Activated CD8-positive, alpha-beta T cell treated with anti-CD3 and anti-CD28 coated beads, Interleukin-2, amount 10 ng/mL, durations not matched to agents 7 days and 5 days (primary cell): ENCODE measurements at regions of chr1 and their contacts with region 1.

Region 1: DNA sequence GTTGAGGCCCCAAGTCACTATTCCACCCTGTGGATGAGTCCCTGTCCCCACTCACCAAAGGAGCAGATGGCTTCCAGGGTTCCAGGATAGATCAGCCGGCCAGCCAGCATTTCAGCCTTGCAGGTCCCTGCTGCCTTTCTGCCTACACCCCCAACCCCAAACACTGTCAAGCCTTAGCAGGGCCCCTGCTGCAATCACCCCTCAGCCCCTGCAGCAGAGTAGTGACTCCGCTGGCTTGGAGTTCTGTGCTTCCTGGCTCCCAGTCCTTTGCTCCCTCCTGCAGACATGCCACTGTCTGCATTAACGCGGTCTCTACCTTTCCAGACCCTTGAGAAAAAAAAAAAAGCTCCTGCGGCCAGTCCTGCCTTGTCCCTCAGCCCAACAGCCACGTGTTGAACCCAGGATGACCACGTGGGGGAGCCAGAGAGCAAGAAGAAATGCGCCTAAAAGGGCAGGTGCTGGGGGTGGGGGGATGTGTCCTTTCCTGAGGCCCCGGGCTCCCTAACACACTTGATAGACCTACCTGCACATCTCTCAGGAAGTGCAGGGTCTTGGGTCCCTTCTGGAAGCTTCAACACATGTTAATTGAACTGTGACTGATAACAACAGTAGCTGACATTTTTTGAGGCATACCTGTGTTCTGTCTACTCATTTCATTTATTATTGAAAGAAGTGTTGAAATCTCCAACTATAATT is 37.4 kb downstream of the RASSF5 start:
- DNase-seq: peak; percentile 85
- ATAC-seq: peak; percentile 81
- H3K4me3 Mint-ChIP-seq: no peak overlapping the region
- H3K27ac Mint-ChIP-seq: peak overlapping the region; percentile 26
- H3K4me1 Mint-ChIP-seq: peaks cover 20% of the 10 kb centered on the region
- H3K27me3 Mint-ChIP-seq: no peaks in the 10 kb centered on the region

Region 2: GRCh38 chr1:206469933-206470691 is 74.6 kb before region 1 on chr1 and contains the start of gene IKBKE:
- CTCF ChIA-PET with region 1: interaction called, 11 read pairs
- POLR2A ChIA-PET with region 1: no interaction called
- DNase-seq: peak; percentile 73
- ATAC-seq: peak; percentile 71
- H3K4me3 Mint-ChIP-seq: peak within 1 kb of the TSS; percentile 89
- H3K27ac Mint-ChIP-seq: peak within 1 kb of the TSS; percentile 94
- H3K4me1 Mint-ChIP-seq: peaks cover 88% of the 10 kb centered on the region
- H3K27me3 Mint-ChIP-seq: no peaks in the 10 kb centered on the region
- total RNA-seq, gene IKBKE: 68.3 to 70.1 TPM

Region 3: DNA sequence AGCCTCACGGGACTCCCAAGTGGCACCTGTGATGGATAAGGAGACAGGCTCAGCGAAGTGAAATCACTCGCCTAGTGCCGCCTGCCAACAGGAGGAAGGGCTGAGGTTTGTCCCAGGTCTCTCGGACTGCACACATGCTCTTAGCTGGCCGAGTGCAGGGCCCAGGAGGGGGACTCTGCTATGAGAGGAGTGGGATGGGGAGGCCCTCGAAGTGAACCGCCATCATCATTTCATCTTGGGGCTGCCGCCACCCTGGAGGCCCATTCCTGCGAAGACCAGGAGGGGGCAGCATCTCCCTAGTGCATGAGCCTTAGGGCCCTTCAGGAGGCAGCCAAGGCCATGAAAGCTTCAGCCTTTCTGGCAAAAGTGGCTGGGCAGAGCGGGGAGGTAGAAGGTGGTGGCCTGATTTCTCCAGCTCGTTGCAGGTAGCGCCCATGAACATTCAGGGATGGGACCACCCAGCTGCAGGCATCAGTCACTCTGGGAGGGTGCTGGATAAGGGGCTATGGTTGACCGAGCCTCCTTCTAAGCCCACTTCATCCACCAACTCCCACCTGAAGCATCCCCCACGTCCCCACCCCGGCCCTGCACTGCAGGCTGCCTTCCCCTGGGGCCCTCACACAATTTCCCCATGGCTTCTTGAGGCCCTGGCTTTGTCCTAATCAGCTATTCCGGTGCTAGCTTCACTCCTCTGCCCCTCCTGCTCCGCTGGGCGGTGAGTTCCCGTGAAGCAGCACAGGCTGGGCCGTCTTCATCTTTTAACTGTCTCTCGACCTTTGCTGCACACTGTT is 54.5 kb before region 1 on chr1:
- CTCF ChIA-PET with region 1: interaction called, 20 read pairs
- POLR2A ChIA-PET with region 1: no interaction called
- DNase-seq: peak; percentile 78
- ATAC-seq: peak; percentile 84
- H3K4me3 Mint-ChIP-seq: no peak overlapping the region
- H3K27ac Mint-ChIP-seq: peak overlapping the region; percentile 68
- H3K4me1 Mint-ChIP-seq: peaks cover 21% of the 10 kb centered on the region
- H3K27me3 Mint-ChIP-seq: no peaks in the 10 kb centered on the region

Region 4: GRCh38 chr1:206556750-206557635 is 12.3 kb after region 1 on chr1:
- CTCF ChIA-PET with region 1: interaction called, 175 read pairs
- POLR2A ChIA-PET with region 1: interaction called, 9 read pairs
- DNase-seq: peak; percentile 95
- ATAC-seq: peak; percentile 71
- H3K4me3 Mint-ChIP-seq: peak overlapping the region; percentile 86
- H3K27ac Mint-ChIP-seq: peak overlapping the region; percentile 82
- H3K4me1 Mint-ChIP-seq: peaks cover 67% of the 10 kb centered on the region
- H3K27me3 Mint-ChIP-seq: no peaks in the 10 kb centered on the region

Region 5: DNA sequence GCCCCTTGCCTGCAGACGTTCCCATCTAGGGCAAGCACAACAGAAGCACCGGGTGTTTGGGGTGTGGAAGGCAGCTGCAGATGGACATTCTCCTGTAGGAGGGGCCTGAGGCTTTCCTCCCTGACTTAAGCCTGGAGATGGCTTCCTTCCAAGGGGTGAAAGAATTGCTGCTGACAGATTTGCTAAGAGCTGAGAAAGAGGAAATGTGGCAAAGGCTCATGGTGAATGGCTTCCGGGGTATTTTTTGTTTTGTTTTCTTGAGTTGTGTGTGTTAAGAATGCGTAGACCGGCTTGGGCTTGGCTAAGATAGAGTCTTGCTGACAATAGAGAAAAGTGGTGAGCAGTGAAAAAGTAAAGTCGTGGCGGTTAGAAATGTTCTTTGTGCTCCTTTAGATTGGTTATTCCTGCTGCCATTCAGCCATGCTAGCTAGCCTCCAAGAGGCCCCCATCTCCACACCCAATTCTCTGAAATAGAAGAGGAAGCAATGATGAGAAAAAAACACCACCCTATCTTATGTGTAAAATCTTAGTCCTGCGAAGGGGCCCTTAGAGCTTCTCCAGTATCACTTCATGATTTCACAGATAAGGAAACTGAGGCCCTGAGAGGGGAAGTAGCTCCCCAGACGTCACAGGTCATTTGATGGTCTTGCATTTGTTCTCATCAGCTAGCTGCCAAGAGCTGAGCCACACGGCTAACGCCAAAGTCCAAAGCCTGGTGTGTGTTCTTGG is 30.6 kb after region 1 on chr1:
- CTCF ChIA-PET with region 1: interaction called, 728 read pairs
- POLR2A ChIA-PET with region 1: interaction called, 276 read pairs
- DNase-seq: peak; percentile 76
- ATAC-seq: peak; percentile 57
- H3K4me3 Mint-ChIP-seq: peak overlapping the region; percentile 62
- H3K27ac Mint-ChIP-seq: peak overlapping the region; percentile 91
- H3K4me1 Mint-ChIP-seq: peaks cover 99% of the 10 kb centered on the region
- H3K27me3 Mint-ChIP-seq: no peaks in the 10 kb centered on the region

Region 6: DNA sequence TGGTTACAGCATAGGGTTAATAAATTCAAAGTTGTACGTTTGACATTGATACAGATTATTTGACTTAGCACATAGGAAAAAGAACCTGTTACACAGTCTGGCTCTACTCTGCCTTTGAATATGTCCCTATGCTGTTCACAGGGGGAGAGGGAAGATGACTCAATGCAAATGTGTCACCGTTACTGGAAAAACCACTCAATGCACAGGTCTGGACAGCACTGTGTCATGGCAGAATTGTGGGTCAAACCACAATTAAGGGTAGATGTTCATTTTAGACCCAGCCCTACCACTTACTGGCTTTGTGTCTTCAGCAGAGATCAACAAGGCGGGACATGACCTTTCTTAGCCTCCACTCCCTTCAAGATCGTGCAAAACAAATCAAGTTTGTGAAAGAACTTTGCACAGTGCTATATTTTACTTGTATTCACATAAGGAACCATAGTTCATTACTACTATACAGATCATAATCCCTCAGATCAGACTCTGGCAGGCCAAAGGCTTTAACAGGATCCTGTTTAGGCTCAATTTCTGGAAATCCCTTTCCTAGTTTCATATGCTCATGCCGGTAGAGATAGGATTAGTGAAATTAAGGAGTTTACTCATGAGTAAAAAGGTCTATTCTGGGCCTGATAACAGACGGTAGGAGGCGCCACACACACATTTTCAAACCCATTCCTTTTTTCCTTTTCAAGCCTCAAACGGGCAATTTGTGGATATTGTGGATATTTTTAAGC is 45.5 kb after region 1 on chr1:
- CTCF ChIA-PET with region 1: interaction called, 728 read pairs
- POLR2A ChIA-PET with region 1: interaction called, 276 read pairs
- DNase-seq: peak; percentile 83
- ATAC-seq: peak; percentile 92
- H3K4me3 Mint-ChIP-seq: peak overlapping the region; percentile 39
- H3K27ac Mint-ChIP-seq: peak overlapping the region; percentile 85
- H3K4me1 Mint-ChIP-seq: peaks cover 66% of the 10 kb centered on the region
- H3K27me3 Mint-ChIP-seq: no peaks in the 10 kb centered on the region

Region 7: GRCh38 chr1:206635080-206635977 is 90.6 kb after region 1 on chr1 and contains the start of gene DYRK3:
- CTCF ChIA-PET with region 1: interaction called, 20 read pairs
- POLR2A ChIA-PET with region 1: no interaction called
- DNase-seq: peak; percentile 95
- ATAC-seq: peak; percentile 95
- H3K4me3 Mint-ChIP-seq: peak within 1 kb of the TSS; percentile 80
- H3K27ac Mint-ChIP-seq: peak within 1 kb of the TSS; percentile 83
- H3K4me1 Mint-ChIP-seq: peaks cover 27% of the 10 kb centered on the region
- H3K27me3 Mint-ChIP-seq: peaks cover 17% of the 10 kb centered on the region
- total RNA-seq, gene DYRK3: 5.3 to 5.9 TPM

Region 8: DNA sequence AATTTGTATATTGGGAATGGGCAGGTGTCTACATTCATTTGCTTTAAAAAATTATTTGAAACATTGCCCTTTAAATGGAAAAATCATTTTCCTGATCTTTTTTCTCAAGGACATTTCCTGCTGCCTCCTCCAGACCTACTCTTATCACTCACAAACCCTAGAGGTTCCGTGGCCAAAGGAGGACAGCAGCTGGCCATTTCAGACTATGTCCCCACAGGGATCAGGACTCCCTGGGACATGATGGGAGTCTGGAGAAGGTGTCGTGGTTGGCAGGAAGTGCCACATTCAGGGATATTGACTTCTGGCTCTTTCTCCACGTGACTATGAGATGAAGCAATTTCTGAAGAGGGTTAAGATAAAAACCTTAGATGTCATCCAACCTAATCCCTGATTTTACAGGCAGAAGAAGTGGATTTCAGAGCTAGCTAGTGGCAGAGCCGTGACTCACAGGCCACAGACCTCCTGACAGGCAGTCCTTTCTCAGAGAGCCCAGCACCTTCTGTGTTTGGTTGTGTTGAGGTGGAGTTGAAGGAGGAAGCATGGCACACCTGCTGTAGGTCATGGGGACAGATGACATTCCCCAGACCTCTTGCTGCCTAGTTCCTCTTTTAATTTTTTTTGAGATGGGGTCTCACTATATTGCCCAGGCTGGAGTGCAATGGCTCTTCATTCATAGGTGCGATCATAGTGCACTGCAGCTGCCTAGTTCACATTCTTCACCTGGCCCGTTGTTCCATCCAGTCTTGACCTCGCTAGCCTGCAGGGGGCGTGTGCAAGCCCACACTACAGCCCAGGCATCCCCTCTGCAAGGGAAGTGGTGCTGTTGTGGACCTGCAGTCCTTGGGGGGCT is 253.0 kb after region 1 on chr1:
- CTCF ChIA-PET with region 1: no interaction called
- POLR2A ChIA-PET with region 1: no interaction called
- DNase-seq: peak; percentile 45
- ATAC-seq: no peak
- H3K4me3 Mint-ChIP-seq: no peak overlapping the region
- H3K27ac Mint-ChIP-seq: no peak overlapping the region
- H3K4me1 Mint-ChIP-seq: peaks cover 51% of the 10 kb centered on the region
- H3K27me3 Mint-ChIP-seq: peaks cover 34% of the 10 kb centered on the region